Activated CD4-positive, alpha-beta T cell treated with anti-CD3 and anti-CD28 coated beads for 36 hours (primary cell): ENCODE measurements at regions of chr4 and their contacts with region 1.

Region 1: GRCh38 chr4:38654273-38654672 is 9.7 kb upstream of the KLF3 start:
- DNase-seq: no peak
- ATAC-seq: peak; percentile 31
- H3K4me3 Mint-ChIP-seq: peak overlapping the region; percentile 25
- H3K27ac Mint-ChIP-seq: peak overlapping the region; percentile 15
- H3K4me1 Mint-ChIP-seq: peaks cover 47% of the 10 kb centered on the region
- H3K27me3 Mint-ChIP-seq: no peaks in the 10 kb centered on the region

Region 2: DNA sequence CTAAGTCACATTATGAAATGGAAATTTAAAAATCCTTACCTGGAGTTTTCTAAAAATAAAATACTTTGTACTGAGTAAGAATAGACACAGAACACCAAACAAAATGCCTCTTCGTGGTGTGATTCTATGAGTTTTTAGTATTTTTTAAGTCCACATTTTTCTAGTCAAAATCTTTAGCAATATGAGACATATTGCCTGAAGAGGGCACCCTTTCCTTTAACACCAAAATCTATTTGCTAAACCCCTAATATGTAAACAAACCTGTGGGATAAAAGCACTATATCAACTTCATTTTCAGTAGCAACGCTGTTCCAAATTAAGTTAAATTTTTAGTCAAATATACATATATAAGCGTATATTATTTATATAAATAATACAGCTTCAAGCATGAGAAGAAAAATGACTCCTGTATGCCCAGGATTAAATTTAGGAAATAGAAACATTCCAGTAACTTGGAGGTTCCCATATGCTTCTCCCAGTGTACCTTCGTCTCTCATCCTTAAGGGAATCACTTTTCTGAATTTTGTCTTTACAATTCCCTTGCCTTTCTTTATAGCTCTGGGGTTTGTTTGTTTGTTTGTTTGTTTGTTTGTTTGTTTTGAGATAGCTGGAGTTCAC is 850.8 kb before region 1 on chr4:
- CTCF ChIA-PET with region 1: no interaction called
- POLR2A ChIA-PET with region 1: no interaction called
- intact Hi-C with region 1: no loop called
- DNase-seq: no peak
- ATAC-seq: no peak
- H3K4me3 Mint-ChIP-seq: no peak overlapping the region
- H3K27ac Mint-ChIP-seq: no peak overlapping the region
- H3K4me1 Mint-ChIP-seq: no peaks in the 10 kb centered on the region
- H3K27me3 Mint-ChIP-seq: peaks cover 4% of the 10 kb centered on the region

Region 3: DNA sequence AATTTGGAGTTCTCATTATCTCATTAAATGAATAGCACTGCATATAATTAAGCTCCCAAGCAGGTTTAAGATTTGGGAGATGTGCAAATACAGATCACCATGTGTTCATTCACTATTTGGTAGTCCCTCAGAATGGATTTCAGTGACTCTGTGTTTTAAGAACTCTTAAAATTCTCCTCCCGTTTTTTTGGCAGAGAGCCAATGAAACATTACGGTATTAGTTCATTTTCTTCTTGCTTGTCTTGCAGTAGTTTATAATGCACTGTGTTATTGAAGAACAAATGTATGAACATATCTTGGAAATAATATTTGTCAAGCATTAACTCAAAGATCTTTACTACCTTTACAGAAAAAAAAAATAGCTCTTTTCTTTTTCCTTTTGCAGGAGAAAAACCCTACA is 42.4 kb after region 1 on chr4:
- CTCF ChIA-PET with region 1: no interaction called
- POLR2A ChIA-PET with region 1: no interaction called
- intact Hi-C with region 1: loop called in 1 of 2 experiments (anchors 2 kb)
- DNase-seq: no peak
- ATAC-seq: no peak
- H3K4me3 Mint-ChIP-seq: no peak overlapping the region
- H3K27ac Mint-ChIP-seq: no peak overlapping the region
- H3K4me1 Mint-ChIP-seq: peaks cover 10% of the 10 kb centered on the region
- H3K27me3 Mint-ChIP-seq: no peaks in the 10 kb centered on the region